Ovary (tissue), 10 donors: ENCODE measurements at regions of chr7 and their contacts with region 1.

Region 1: GRCh38 chr7:17640730-17641377 is 299.4 kb downstream of the SNX13 start:
- DNase-seq: peak in 1 of 5 donors; percentile 34
- H3K4me3 ChIP-seq: no peak overlapping the region
- H3K27ac ChIP-seq: no peak overlapping the region
- H3K4me1 ChIP-seq: no peaks in the 10 kb centered on the region
- H3K27me3 ChIP-seq: no peaks in the 10 kb centered on the region
- CTCF ChIP-seq: peak in 1 of 3 donors; percentile 46
- EP300 ChIP-seq: no peak
- POLR2A ChIP-seq: no peak

Region 2: GRCh38 chr7:16982640-16983350 is 658.1 kb before region 1 on chr7:
- intact Hi-C with region 1: loop called in 2 of 4 experiments (anchors 10 kb)
- DNase-seq: peak in 1 of 5 donors; percentile 23
- H3K4me3 ChIP-seq: no peak overlapping the region
- H3K27ac ChIP-seq: no peak overlapping the region
- H3K4me1 ChIP-seq: no peaks in the 10 kb centered on the region
- H3K27me3 ChIP-seq: no peaks in the 10 kb centered on the region
- CTCF ChIP-seq: peak; percentile 56 to 79 (median 78)
- EP300 ChIP-seq: no peak
- POLR2A ChIP-seq: no peak